HEK293 (cell line): ENCODE measurements at regions of chr1 and their contacts with region 1.

Region 1: DNA sequence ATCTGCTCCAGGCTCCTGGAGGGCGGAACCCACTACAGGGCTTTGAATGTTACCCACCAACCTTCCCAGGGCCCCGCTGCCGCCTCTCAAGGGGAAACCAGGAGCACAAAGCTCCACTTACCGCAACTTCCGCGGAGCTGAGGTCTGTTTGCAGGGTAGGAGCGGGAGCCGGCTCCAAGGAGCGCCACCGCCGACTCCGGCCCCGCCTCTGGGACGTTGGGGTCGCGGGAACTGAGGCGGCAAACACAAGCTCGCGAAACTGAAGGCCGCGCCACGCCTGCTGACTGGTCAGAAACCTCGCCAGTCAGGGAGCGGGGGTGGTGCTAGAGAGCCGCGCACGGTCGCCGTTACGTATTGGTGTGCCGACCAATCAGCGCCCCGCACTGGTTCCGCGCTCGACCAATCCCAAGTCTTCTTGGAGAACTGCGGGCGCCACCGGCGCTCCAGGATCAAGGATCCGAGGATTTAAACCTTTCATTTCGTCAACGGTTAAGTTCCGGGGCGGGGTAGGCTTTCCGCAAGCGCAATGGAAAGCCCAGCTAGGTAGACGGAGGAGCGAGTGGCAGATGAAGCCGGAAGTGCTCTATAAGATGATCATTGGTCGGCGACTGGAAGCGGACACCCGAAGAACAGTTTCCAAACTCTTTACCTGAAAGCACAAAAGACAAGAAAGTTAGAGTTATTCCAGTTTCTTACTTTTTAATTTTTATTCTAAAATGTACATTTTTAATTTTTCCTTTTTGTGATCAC is at the start of gene STIL:
- H3K4me3 ChIP-seq: peak within 1 kb of the TSS; percentile 92
- H3K27ac ChIP-seq: peak within 1 kb of the TSS; percentile 65
- H3K4me1 ChIP-seq: no peaks in the 10 kb centered on the region; the same call in 1 of the 2 replicates
- CTCF ChIP-seq: no peak

Region 2: GRCh38 chr1:47179017-47179987 is 134.8 kb before region 1 on chr1:
- CTCF ChIA-PET with region 1: interaction called, 3 read pairs
- POLR2A ChIA-PET with region 1: interaction called, 23 read pairs
- H3K4me3 ChIP-seq: peak overlapping the region; percentile 38
- H3K27ac ChIP-seq: no peak overlapping the region
- H3K4me1 ChIP-seq: no peaks in the 10 kb centered on the region
- CTCF ChIP-seq: peak; percentile 91

Region 3: GRCh38 chr1:47325530-47325929 is 11.4 kb after region 1 on chr1:
- CTCF ChIA-PET with region 1: interaction called, 4 read pairs
- POLR2A ChIA-PET with region 1: interaction called, 32 read pairs
- H3K4me3 ChIP-seq: no peak overlapping the region
- H3K27ac ChIP-seq: no peak overlapping the region
- H3K4me1 ChIP-seq: no peaks in the 10 kb centered on the region; the same call in 1 of the 2 replicates
- CTCF ChIP-seq: no peak

Region 4: DNA sequence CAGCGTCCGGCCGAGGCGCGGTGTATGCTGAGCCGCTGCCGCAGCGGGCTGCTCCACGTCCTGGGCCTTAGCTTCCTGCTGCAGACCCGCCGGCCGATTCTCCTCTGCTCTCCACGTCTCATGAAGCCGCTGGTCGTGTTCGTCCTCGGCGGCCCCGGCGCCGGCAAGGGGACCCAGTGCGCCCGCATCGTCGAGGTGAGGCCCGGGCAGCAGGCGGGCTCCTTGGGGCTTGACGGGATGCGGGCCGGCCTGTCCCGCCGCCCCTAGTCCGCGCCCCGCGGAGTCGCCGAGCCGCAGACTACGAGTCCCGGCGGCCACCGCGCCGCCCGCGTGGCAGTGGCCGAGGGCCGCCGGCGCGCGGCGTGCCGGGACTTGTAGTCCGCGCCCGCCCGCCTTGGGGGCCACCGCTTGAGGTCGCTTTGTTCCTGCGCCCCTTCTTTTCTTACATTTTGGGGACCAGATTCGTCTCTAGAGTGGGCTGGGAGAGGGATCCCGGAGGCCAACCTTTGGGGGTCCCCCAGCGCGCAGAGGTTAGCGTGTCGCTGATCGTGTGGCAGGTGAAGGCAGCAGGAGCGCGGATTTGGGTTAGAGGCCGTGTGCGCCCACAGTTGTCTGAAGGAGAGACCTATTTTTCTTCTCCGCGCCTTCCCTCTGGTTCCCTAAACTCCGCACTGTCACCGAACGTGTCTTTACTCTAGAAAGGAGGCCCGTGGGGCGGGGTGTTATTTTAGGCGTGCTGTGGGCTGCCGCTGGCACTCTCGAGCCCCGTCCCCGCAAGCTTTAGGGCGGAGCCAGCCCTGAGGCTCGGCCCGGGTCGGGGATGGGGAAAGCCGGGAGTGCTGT is 20.1 kb after region 1 on chr1:
- CTCF ChIA-PET with region 1: interaction called, 20 read pairs
- POLR2A ChIA-PET with region 1: interaction called, 88 read pairs
- H3K4me3 ChIP-seq: peak overlapping the region; percentile 84
- H3K27ac ChIP-seq: peak overlapping the region; percentile 99
- H3K4me1 ChIP-seq: no peaks in the 10 kb centered on the region
- CTCF ChIP-seq: peak; percentile 64; the same call in 1 of the 2 replicates